Caco-2 (cell line): ENCODE measurements at regions of chr3 and their contacts with region 1.

Region 1: DNA sequence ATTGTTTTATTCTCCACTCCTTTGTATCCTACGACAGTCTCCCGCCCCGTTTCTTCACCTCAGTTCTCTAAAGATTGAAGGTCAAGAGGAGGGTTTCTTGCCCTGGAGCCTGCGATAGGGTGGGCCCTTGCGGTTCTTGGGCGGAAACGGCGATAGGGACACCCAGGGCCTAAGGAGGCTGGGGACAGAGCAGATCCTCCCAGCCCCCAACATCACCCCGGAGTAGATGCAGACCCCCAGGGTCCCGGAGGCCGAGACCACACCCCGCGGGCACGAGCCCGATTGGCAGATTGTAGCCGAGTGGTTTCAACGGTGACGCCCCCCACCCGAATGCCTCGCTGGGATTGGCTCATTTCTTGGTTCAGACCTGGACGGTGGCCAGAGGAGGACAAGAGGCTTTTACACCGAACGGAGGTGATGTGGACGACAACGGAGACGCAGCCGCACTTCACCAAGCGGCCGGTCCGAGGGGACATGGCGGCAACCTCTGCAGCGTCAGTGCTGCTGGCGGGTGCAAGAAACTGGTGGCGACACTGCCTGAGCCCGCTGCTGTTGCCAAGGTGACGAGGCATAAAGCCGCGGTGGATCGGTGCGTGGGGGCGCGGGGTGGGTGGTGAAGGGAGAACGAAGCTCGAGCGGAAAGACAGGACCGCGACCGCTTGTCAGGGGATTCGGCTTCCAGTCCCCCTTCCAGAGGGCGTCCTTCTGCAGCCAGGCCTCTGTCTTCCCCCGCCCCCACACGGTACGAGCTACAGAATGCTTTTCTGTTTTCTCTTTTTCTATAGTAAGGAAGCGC is 19.0 kb upstream of the MCF2L2 start:
- DNase-seq: peak; percentile 94 to 95
- H3K4me3 ChIP-seq: peak overlapping the region; percentile 95
- H3K4me3 Mint-ChIP-seq: peak overlapping the region; percentile 82
- H3K27ac Mint-ChIP-seq: peak overlapping the region; percentile 69
- H3K4me1 ChIP-seq: no peaks in the 10 kb centered on the region
- H3K4me1 Mint-ChIP-seq: peaks cover 13% of the 10 kb centered on the region
- H3K27me3 ChIP-seq: no peaks in the 10 kb centered on the region
- H3K27me3 Mint-ChIP-seq: no peaks in the 10 kb centered on the region
- CTCF ChIP-seq: peak in 1 of 2 experiments; percentile 8

Region 2: DNA sequence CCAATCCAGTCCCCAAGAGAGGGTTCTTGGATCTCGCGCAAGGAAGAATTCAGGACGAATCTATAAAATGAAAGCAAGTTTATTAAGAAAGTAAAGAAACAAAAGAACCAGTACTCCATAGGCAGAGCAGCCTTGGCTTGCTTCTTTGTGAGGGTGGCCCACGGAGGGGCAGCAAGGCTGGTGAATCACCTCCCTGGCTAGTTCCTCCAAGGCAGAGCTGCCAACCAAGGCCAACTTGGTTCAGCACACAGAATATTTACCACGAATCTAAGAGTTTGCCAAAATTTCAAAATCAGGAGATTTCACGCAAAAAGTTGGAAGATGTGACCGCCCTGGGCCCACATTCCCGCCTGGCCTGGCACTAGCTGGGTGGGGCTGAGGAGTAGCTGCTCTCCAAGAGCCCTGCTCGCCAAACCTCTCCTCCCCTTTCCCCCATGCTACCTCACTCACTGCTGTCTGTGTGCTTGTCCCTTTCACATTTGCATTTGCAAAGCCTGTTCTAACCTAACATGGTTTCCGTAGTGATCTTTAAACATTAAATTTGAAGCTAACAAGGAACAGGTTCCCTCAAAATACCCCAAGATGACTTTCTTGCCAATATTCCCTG is 440.9 kb before region 1 on chr3:
- CTCF ChIA-PET with region 1: no interaction called
- POLR2A ChIA-PET with region 1: no interaction called
- intact Hi-C with region 1: no loop called
- DNase-seq: no peak
- H3K4me3 ChIP-seq: no peak overlapping the region
- H3K4me3 Mint-ChIP-seq: no peak overlapping the region
- H3K27ac Mint-ChIP-seq: no peak overlapping the region
- H3K4me1 ChIP-seq: no peaks in the 10 kb centered on the region
- H3K4me1 Mint-ChIP-seq: no peaks in the 10 kb centered on the region
- H3K27me3 ChIP-seq: no peaks in the 10 kb centered on the region
- H3K27me3 Mint-ChIP-seq: no peaks in the 10 kb centered on the region
- CTCF ChIP-seq: no peak

Region 3: GRCh38 chr3:183392186-183393034 is 55.0 kb before region 1 on chr3:
- CTCF ChIA-PET with region 1: no interaction called
- POLR2A ChIA-PET with region 1: no interaction called
- intact Hi-C with region 1: loop called (anchors 5 kb)
- DNase-seq: no peak
- H3K4me3 ChIP-seq: no peak overlapping the region
- H3K4me3 Mint-ChIP-seq: no peak overlapping the region
- H3K27ac Mint-ChIP-seq: no peak overlapping the region
- H3K4me1 ChIP-seq: peaks cover 9% of the 10 kb centered on the region
- H3K4me1 Mint-ChIP-seq: no peaks in the 10 kb centered on the region
- H3K27me3 ChIP-seq: no peaks in the 10 kb centered on the region
- H3K27me3 Mint-ChIP-seq: no peaks in the 10 kb centered on the region
- CTCF ChIP-seq: no peak

Region 4: DNA sequence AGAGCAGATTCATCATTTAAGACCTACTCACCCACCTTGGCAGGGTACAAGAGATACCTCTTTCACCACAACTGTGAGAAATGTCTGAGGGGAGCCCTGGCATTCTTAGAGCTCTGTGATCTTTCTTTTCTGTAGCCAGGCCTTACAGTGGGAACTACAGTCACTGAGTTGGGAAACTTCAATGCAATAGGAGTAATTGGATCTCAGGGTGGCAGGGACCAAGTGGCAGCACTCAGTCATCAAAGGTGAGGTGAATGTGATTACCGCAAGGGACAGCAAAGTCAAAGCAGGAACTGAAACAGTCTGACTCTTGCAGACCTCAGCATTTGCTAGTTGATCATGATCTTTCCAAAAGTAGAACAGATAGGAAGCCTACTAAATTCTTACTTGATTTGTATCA is 11.7 kb before region 1 on chr3:
- CTCF ChIA-PET with region 1: interaction called, 3 read pairs
- POLR2A ChIA-PET with region 1: no interaction called
- intact Hi-C with region 1: loop called (anchors 1 kb)
- DNase-seq: no peak
- H3K4me3 ChIP-seq: no peak overlapping the region
- H3K4me3 Mint-ChIP-seq: no peak overlapping the region
- H3K27ac Mint-ChIP-seq: peak overlapping the region; percentile 75
- H3K4me1 ChIP-seq: peaks cover 32% of the 10 kb centered on the region
- H3K4me1 Mint-ChIP-seq: peaks cover 9% of the 10 kb centered on the region
- H3K27me3 ChIP-seq: no peaks in the 10 kb centered on the region
- H3K27me3 Mint-ChIP-seq: no peaks in the 10 kb centered on the region
- CTCF ChIP-seq: no peak